Heart left ventricle (tissue), 16 donors: ENCODE measurements at regions of chr15 and their contacts with region 1.

Region 1: GRCh38 chr15:98954411-98954810 is 53.2 kb downstream of the PGPEP1L start:
- DNase-seq: peak; percentile 76 to 91 (median 85)
- ATAC-seq: peak; percentile 76 to 88 (median 85)
- H3K4me3 ChIP-seq: no peak overlapping the region
- H3K27ac ChIP-seq: peak overlapping the region; percentile 58 to 90 (median 81)
- H3K4me1 ChIP-seq: peaks cover 0 to 59% (median 34%) of the 10 kb centered on the region in 12 donors
- H3K27me3 ChIP-seq: no peaks in the 10 kb centered on the region
- CTCF ChIP-seq: no peak
- POLR2A ChIP-seq: no peak

Region 2: DNA sequence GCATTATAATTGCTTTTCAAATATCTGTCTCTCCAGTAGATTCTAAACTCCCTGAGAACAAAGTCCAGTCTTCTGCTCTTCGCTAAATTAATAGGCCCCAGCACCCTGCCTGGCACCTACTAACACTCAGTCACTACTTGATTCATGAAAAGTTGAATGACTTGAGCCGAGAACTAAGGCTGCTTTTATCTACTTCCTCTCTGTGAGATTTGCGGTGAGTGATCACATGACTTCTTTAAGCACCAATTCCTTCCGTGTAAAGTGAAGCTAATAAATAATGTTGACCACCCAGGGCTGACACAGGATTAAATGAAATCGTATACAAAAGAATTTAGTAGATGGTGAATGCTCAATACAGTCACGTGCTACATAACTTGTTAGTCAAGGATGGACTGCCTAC is 97.8 kb after region 1 on chr15:
- intact Hi-C with region 1: loop called in 6 of 10 experiments (anchors 5 to 10 kb)
- DNase-seq: no peak
- ATAC-seq: no peak
- H3K4me3 ChIP-seq: no peak overlapping the region
- H3K27ac ChIP-seq: no peak overlapping the region
- H3K4me1 ChIP-seq: peaks cover 0 to 19% (median 5%) of the 10 kb centered on the region in 12 donors
- H3K27me3 ChIP-seq: no peaks in the 10 kb centered on the region
- CTCF ChIP-seq: no peak
- POLR2A ChIP-seq: no peak